HepG2 (cell line): ENCODE measurements at regions of chr1 and their contacts with region 1.

Region 1: DNA sequence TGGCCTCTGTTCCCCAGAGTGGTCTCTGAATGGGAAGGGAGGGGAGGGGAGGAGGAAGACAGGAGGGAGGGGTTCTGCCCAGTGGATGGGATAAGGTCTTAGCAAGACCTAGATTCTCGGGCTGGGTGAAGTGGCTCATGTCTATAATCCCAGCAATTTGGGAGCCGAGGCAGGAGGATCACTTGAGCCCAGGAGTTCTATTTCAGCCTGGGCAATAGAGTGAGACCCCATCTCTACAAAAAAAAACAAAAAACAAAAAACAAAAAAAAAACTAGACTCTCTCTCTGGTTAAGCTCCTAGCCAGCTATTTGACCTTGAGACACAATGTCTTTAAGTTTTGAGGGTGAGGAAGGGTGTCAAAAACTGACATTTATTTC is 11.4 kb downstream of the UQCRHL start:
- DNase-seq: no peak
- ATAC-seq: no peak
- H3K4me3 ChIP-seq: no peak overlapping the region
- H3K27ac ChIP-seq: peak overlapping the region; percentile 57
- H3K4me1 ChIP-seq: peaks cover 85% of the 10 kb centered on the region
- H3K27me3 ChIP-seq: no peaks in the 10 kb centered on the region
- CTCF ChIP-seq: no peak
- EP300 ChIP-seq: no peak
- POLR2A ChIP-seq: no peak
- RAD21 ChIP-seq: no peak

Region 2: GRCh38 chr1:15775706-15776105 is 20.4 kb before region 1 on chr1:
- CTCF ChIA-PET with region 1: no interaction called
- POLR2A ChIA-PET with region 1: no interaction called
- in situ Hi-C with region 1: no loop called
- intact Hi-C with region 1: loop called (anchors 1 kb)
- DNase-seq: no peak
- ATAC-seq: no peak
- H3K4me3 ChIP-seq: no peak overlapping the region
- H3K27ac ChIP-seq: no peak overlapping the region
- H3K4me1 ChIP-seq: peaks cover 23% of the 10 kb centered on the region
- H3K27me3 ChIP-seq: no peaks in the 10 kb centered on the region
- CTCF ChIP-seq: no peak
- EP300 ChIP-seq: no peak
- POLR2A ChIP-seq: no peak
- RAD21 ChIP-seq: no peak

Region 3: DNA sequence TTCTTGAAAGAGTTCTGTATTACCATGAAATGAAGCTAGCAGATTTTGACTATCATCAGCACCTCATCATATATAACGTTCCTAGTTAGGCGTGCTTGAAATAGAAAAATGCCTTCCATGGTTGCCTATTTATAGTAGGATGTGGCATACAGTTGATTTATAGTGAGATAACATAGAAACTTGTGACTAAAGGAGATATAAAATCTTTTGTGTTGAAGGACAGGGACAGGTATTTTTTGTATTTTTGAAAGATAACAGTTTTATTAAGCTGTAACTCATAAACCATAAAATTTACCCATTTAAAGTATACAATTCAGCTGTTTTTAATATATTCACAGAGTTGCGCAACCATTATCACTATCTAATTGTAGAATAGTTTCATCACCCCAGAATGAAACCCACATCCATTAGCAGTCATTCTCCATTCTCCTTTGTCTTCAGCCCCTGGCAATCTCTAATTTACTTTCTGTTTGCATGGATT is 70.7 kb after region 1 on chr1:
- CTCF ChIA-PET with region 1: no interaction called
- POLR2A ChIA-PET with region 1: no interaction called
- in situ Hi-C with region 1: no loop called
- intact Hi-C with region 1: no loop called
- DNase-seq: no peak
- ATAC-seq: no peak
- H3K4me3 ChIP-seq: no peak overlapping the region
- H3K27ac ChIP-seq: no peak overlapping the region
- H3K4me1 ChIP-seq: no peaks in the 10 kb centered on the region
- H3K27me3 ChIP-seq: no peaks in the 10 kb centered on the region
- CTCF ChIP-seq: no peak
- EP300 ChIP-seq: no peak
- POLR2A ChIP-seq: no peak
- RAD21 ChIP-seq: no peak